Esophagus muscularis mucosa (tissue), 4 donors: ENCODE measurements at regions of chr14 and their contacts with region 1.

Region 1: GRCh38 chr14:73295198-73295796 is 58.0 kb downstream of the PAPLN start:
- DNase-seq: no peak
- H3K4me3 ChIP-seq: no peak overlapping the region
- H3K27ac ChIP-seq: no peak overlapping the region
- H3K4me1 ChIP-seq: peaks cover 0 to 19% (median 7%) of the 10 kb centered on the region in 4 donors
- H3K27me3 ChIP-seq: no peaks in the 10 kb centered on the region
- CTCF ChIP-seq: peak; percentile 71 to 74 (median 73)
- EP300 ChIP-seq: no peak
- POLR2A ChIP-seq: no peak

Region 2: DNA sequence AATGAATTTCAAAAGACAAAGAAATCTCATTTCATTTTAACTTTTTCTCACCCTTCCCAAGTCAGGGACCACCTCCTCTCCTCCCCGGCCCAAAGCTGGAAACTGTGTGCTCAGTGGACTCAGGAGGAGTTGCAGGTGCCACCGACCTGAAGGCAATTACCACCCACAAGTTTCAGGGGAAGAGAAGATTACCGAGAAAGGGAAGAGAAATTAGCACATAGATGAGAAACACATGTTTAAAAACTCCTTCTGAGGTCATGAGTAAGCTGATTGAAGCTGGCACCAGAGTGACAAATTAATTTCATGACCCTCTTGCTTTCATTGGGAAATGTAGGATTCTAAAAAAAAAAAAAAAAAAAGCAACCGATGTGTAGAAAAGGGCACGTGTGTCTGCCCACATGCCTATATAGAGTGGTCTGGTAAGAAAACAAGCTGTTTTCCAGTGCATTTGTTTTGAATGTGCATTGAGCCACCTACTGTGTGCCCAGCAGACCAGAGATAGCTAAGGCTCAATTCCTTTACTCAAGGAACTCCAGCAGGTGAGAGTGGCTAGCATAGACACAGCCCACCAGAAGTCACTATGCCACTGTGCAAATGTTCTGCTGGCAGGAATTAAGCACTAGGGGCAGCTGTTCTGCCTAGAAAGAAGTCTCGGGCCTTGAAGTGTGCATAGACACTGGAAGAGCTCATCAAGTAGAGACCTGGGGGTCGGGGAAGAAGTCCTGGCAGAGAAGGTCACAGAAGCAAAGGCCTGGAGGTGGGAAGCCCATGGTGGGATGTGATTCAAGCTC is 431.9 kb before region 1 on chr14:
- intact Hi-C with region 1: no loop called
- DNase-seq: no peak
- H3K4me3 ChIP-seq: no peak overlapping the region
- H3K27ac ChIP-seq: no peak overlapping the region
- H3K4me1 ChIP-seq: peaks cover 0 to 20% (median 0%) of the 10 kb centered on the region in 4 donors
- H3K27me3 ChIP-seq: no peaks in the 10 kb centered on the region
- CTCF ChIP-seq: no peak
- EP300 ChIP-seq: no peak
- POLR2A ChIP-seq: no peak

Region 3: GRCh38 chr14:73472185-73473114 is 177.2 kb after region 1 on chr14:
- intact Hi-C with region 1: loop called (anchors 5 kb)
- DNase-seq: no peak
- H3K4me3 ChIP-seq: no peak overlapping the region
- H3K27ac ChIP-seq: no peak overlapping the region
- H3K4me1 ChIP-seq: peaks cover 0 to 16% (median 11%) of the 10 kb centered on the region in 4 donors
- H3K27me3 ChIP-seq: no peaks in the 10 kb centered on the region
- CTCF ChIP-seq: peak; percentile 67 to 75 (median 72)
- EP300 ChIP-seq: no peak
- POLR2A ChIP-seq: no peak

Region 4: DNA sequence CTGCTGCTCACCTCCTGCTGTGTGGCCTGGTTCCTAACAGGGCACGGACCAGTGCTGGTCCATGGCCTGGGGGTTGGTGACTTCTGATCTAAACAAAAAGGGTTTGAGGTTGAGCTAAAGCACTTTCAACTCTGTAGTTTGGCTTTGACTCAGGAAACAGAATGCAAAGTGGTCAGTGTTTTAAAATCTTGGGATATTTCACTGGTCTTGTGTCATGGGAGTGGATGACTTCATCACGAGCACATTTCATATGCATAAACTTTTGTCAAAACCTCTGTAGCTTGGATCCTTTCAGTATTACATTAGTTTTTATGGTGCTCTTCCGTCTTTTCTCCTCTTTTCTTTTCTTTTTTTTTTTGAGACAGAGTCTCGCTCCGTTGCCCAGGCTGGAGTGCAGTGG is 629.0 kb after region 1 on chr14:
- intact Hi-C with region 1: no loop called
- DNase-seq: no peak
- H3K4me3 ChIP-seq: no peak overlapping the region
- H3K27ac ChIP-seq: no peak overlapping the region
- H3K4me1 ChIP-seq: no peaks in the 10 kb centered on the region
- H3K27me3 ChIP-seq: no peaks in the 10 kb centered on the region
- CTCF ChIP-seq: no peak
- EP300 ChIP-seq: no peak
- POLR2A ChIP-seq: no peak